ENCODE measurements at regions of chr19 and their contacts with region 1.

Region 1: GRCh38 chr19:48391107-48391986 is at the start of gene KDELR1:
- DNase-seq: peak; percentile 73
- H3K4me3 Mint-ChIP-seq: peak within 1 kb of the TSS; percentile 94
- H3K27ac Mint-ChIP-seq: peak within 1 kb of the TSS; percentile 90
- H3K4me1 Mint-ChIP-seq: peaks cover 36% of the 10 kb centered on the region
- H3K27me3 Mint-ChIP-seq: peaks cover 27% of the 10 kb centered on the region
- total RNA-seq, gene KDELR1: 81.5 to 83.8 TPM

Region 2: GRCh38 chr19:48405850-48406249 is 14.5 kb after region 1 on chr19:
- CTCF ChIA-PET with region 1: interaction called, 13 read pairs
- intact Hi-C with region 1: no loop called
- DNase-seq: no peak
- H3K4me3 Mint-ChIP-seq: no peak overlapping the region
- H3K27ac Mint-ChIP-seq: no peak overlapping the region
- H3K4me1 Mint-ChIP-seq: peaks cover 2% of the 10 kb centered on the region
- H3K27me3 Mint-ChIP-seq: peaks cover 3% of the 10 kb centered on the region

Region 3: DNA sequence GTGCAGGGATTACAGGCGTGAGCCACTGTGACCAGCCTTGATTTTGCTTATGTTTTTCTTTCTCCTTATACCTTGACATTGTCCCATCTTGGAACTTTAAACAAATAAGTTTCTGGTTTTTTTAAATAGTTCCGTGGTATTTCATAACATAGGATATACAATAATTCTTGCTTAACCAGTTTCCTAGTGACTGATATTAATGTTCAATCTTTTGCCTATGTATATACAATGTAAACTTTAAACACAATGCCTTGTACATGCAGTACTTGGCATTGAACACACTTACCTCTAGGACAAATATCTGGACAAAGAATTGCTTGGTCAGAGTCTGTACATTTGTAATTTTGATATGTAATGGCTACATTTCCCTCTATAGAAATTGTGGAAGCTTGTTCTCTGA is 190.8 kb after region 1 on chr19:
- CTCF ChIA-PET with region 1: interaction called, 10 read pairs
- intact Hi-C with region 1: loop called (anchors 5 kb)
- DNase-seq: no peak
- H3K4me3 Mint-ChIP-seq: no peak overlapping the region
- H3K27ac Mint-ChIP-seq: no peak overlapping the region
- H3K4me1 Mint-ChIP-seq: peaks cover 3% of the 10 kb centered on the region
- H3K27me3 Mint-ChIP-seq: peaks cover 4% of the 10 kb centered on the region